ENCODE measurements at regions of chr14 and their contacts with region 1.

Region 1: GRCh38 chr14:67285876-67286452 is 44.7 kb downstream of the PALS1 start:
- DNase-seq: no peak
- ATAC-seq: no peak

Region 2: GRCh38 chr14:67166450-67166853 is 119.5 kb before region 1 on chr14:
- intact Hi-C with region 1: loop called (anchors 5 kb)
- DNase-seq: no peak
- ATAC-seq: no peak

Region 3: GRCh38 chr14:67396501-67396900 is 110.5 kb after region 1 on chr14:
- intact Hi-C with region 1: no loop called
- DNase-seq: no peak
- ATAC-seq: no peak

Measured in left ventricle myocardium superior (tissue), 1 donor.